PC-9 (cell line): ENCODE measurements at regions of chr1 and their contacts with region 1.

Region 1: GRCh38 chr1:182381962-182382819 is 9.4 kb downstream of the GLUL start:
- DNase-seq: no peak
- H3K4me3 ChIP-seq: no peak overlapping the region
- H3K27ac ChIP-seq: no peak overlapping the region
- H3K4me1 ChIP-seq: peaks cover 34% of the 10 kb centered on the region
- H3K27me3 ChIP-seq: no peaks in the 10 kb centered on the region
- CTCF ChIP-seq: no peak

Region 2: GRCh38 chr1:181872562-181873144 is 509.5 kb before region 1 on chr1:
- CTCF ChIA-PET with region 1: no interaction called
- POLR2A ChIA-PET with region 1: no interaction called
- intact Hi-C with region 1: no loop called
- DNase-seq: no peak
- H3K4me3 ChIP-seq: no peak overlapping the region
- H3K27ac ChIP-seq: no peak overlapping the region
- H3K4me1 ChIP-seq: no peaks in the 10 kb centered on the region
- H3K27me3 ChIP-seq: no peaks in the 10 kb centered on the region
- CTCF ChIP-seq: no peak

Region 3: GRCh38 chr1:182259229-182259872 is 122.8 kb before region 1 on chr1:
- CTCF ChIA-PET with region 1: no interaction called
- POLR2A ChIA-PET with region 1: no interaction called
- intact Hi-C with region 1: no loop called
- DNase-seq: peak; percentile 36 to 89
- H3K4me3 ChIP-seq: no peak overlapping the region
- H3K27ac ChIP-seq: peak overlapping the region; percentile 2; the same call in 1 of the 2 replicates
- H3K4me1 ChIP-seq: peaks cover 13% of the 10 kb centered on the region
- H3K27me3 ChIP-seq: no peaks in the 10 kb centered on the region
- CTCF ChIP-seq: no peak

Region 4: GRCh38 chr1:182340233-182340926 is 41.8 kb before region 1 on chr1:
- CTCF ChIA-PET with region 1: no interaction called
- POLR2A ChIA-PET with region 1: no interaction called
- intact Hi-C with region 1: loop called (anchors 5 kb)
- DNase-seq: peak in 1 of 2 experiments; percentile 56
- H3K4me3 ChIP-seq: no peak overlapping the region
- H3K27ac ChIP-seq: no peak overlapping the region
- H3K4me1 ChIP-seq: no peaks in the 10 kb centered on the region
- H3K27me3 ChIP-seq: no peaks in the 10 kb centered on the region
- CTCF ChIP-seq: no peak

Region 5: GRCh38 chr1:182410620-182411273 is 28.6 kb after region 1 on chr1:
- CTCF ChIA-PET with region 1: no interaction called
- POLR2A ChIA-PET with region 1: no interaction called
- intact Hi-C with region 1: no loop called
- DNase-seq: no peak
- H3K4me3 ChIP-seq: no peak overlapping the region
- H3K27ac ChIP-seq: no peak overlapping the region
- H3K4me1 ChIP-seq: no peaks in the 10 kb centered on the region
- H3K27me3 ChIP-seq: peaks cover 4% of the 10 kb centered on the region; the same call in 1 of the 2 replicates
- CTCF ChIP-seq: no peak

Region 6: DNA sequence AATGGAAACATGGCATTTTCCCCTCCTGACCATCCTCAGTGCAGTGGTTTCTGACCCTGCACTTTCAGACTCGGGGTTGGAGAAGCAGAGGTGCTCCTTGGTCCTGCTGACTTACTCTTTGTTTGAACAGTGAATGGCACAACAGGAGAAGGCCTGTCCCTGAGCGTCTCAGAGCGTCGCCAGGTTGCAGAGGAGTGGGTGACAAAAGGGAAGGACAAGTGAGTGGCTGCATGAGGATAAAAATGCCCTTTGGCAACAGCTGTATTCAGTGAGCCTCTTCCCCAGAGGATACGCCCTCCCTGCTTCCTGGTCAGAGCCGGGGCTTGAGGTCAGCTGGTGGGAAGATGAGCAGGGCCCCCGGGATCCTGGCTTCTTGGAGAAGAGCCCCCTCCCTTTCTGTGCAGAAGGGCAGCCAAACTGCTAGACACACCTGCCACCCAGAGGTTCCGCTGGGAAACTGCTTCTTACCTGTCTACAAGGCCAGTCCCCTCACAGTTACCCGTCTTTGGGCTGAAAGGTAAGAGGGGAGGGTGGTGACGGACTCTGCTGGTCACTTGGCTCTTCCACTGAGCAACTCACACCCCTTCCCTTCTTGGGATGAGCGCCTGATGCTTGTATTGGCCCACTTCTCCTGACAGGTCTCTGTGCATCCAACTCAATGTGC is 424.0 kb after region 1 on chr1:
- CTCF ChIA-PET with region 1: no interaction called
- POLR2A ChIA-PET with region 1: interaction called, 12 read pairs
- intact Hi-C with region 1: no loop called
- DNase-seq: no peak
- H3K4me3 ChIP-seq: no peak overlapping the region
- H3K27ac ChIP-seq: no peak overlapping the region
- H3K4me1 ChIP-seq: peaks cover 9% of the 10 kb centered on the region; the same call in 1 of the 2 replicates
- H3K27me3 ChIP-seq: no peaks in the 10 kb centered on the region
- CTCF ChIP-seq: no peak